MCF 10A (cell line): ENCODE measurements at regions of chr10 and their contacts with region 1.

Region 1: GRCh38 chr10:102225646-102226541 is at the start of gene ELOVL3:
- DNase-seq: peak; percentile 64
- H3K4me3 Mint-ChIP-seq: peak within 1 kb of the TSS; percentile 62
- H3K27ac Mint-ChIP-seq: no peak within 1 kb of the TSS
- H3K4me1 Mint-ChIP-seq: peaks cover 25% of the 10 kb centered on the region
- H3K27me3 Mint-ChIP-seq: peaks cover 37% of the 10 kb centered on the region
- CTCF ChIP-seq: no peak
- total RNA-seq, gene ELOVL3: not detected in 2 replicates

Region 2: GRCh38 chr10:102211615-102212299 is 14.1 kb before region 1 on chr10:
- CTCF ChIA-PET with region 1: interaction called, 5 read pairs
- POLR2A ChIA-PET with region 1: interaction called, 11 read pairs
- intact Hi-C with region 1: no loop called
- DNase-seq: no peak
- H3K4me3 Mint-ChIP-seq: no peak overlapping the region
- H3K27ac Mint-ChIP-seq: no peak overlapping the region
- H3K4me1 Mint-ChIP-seq: no peaks in the 10 kb centered on the region
- H3K27me3 Mint-ChIP-seq: no peaks in the 10 kb centered on the region
- CTCF ChIP-seq: no peak

Region 3: DNA sequence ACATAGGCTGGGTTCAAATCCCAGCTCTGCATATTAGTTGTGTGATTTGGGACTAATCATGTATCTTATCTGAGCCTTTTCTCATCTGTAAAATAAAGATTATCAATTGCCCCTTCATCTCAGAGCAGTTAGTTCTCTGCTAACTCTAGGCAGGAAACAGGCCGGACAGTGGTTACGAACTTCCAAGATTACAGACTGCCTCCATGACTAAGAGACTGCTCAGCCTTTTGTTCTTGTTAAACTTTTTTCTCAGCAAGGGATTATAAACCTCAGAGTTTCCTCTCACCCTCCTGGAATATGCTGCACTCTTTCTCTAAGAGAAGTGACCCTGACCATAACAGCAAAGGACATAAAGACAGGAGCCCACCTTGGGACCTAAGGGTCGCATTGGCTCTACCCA is 117.1 kb after region 1 on chr10:
- CTCF ChIA-PET with region 1: interaction called, 354 read pairs
- POLR2A ChIA-PET with region 1: interaction called, 7 read pairs
- intact Hi-C with region 1: loop called (anchors 1 kb)
- DNase-seq: peak; percentile 61
- H3K4me3 Mint-ChIP-seq: no peak overlapping the region
- H3K27ac Mint-ChIP-seq: peak overlapping the region; percentile 82
- H3K4me1 Mint-ChIP-seq: peaks cover 25% of the 10 kb centered on the region
- H3K27me3 Mint-ChIP-seq: no peaks in the 10 kb centered on the region
- CTCF ChIP-seq: no peak

Region 4: GRCh38 chr10:102368072-102368471 is 142.2 kb after region 1 on chr10:
- CTCF ChIA-PET with region 1: interaction called, 14 read pairs
- POLR2A ChIA-PET with region 1: interaction called, 4 read pairs
- intact Hi-C with region 1: no loop called
- DNase-seq: no peak
- H3K4me3 Mint-ChIP-seq: no peak overlapping the region
- H3K27ac Mint-ChIP-seq: peak overlapping the region; percentile 67
- H3K4me1 Mint-ChIP-seq: peaks cover 23% of the 10 kb centered on the region
- H3K27me3 Mint-ChIP-seq: no peaks in the 10 kb centered on the region
- CTCF ChIP-seq: no peak

Region 5: GRCh38 chr10:102399217-102400089 is 173.6 kb after region 1 on chr10:
- CTCF ChIA-PET with region 1: interaction called, 74 read pairs
- POLR2A ChIA-PET with region 1: interaction called, 10 read pairs
- intact Hi-C with region 1: no loop called
- DNase-seq: peak; percentile 75
- H3K4me3 Mint-ChIP-seq: peak overlapping the region; percentile 54
- H3K27ac Mint-ChIP-seq: no peak overlapping the region
- H3K4me1 Mint-ChIP-seq: peaks cover 23% of the 10 kb centered on the region
- H3K27me3 Mint-ChIP-seq: no peaks in the 10 kb centered on the region
- CTCF ChIP-seq: peak; percentile 92

Region 6: DNA sequence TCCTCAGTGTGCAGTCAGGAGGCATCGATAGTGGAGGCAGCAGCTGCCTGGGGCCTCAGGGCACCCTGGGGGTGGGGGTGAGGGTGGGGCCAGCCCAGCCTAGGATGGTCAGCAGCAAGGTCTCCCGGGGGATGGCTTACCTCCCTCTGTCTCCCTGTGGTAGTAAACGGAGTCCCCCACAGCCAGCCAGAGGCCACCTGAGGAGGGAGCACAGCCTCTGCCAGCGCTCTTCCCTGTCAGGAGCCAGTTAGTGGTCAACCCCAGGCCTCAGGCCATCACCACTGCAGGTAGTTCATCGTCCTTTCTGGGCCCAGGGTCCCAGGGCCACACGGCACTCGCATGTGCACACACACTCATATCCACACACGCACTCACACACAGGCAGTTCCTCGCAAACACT is 254.5 kb after region 1 on chr10:
- CTCF ChIA-PET with region 1: interaction called, 4 read pairs
- POLR2A ChIA-PET with region 1: interaction called, 3 read pairs
- intact Hi-C with region 1: loop called (anchors 2 kb)
- DNase-seq: no peak
- H3K4me3 Mint-ChIP-seq: no peak overlapping the region
- H3K27ac Mint-ChIP-seq: no peak overlapping the region
- H3K4me1 Mint-ChIP-seq: no peaks in the 10 kb centered on the region
- H3K27me3 Mint-ChIP-seq: no peaks in the 10 kb centered on the region
- CTCF ChIP-seq: no peak